K562 (cell line): ENCODE measurements at regions of chr7 and their contacts with region 1.

Region 1: DNA sequence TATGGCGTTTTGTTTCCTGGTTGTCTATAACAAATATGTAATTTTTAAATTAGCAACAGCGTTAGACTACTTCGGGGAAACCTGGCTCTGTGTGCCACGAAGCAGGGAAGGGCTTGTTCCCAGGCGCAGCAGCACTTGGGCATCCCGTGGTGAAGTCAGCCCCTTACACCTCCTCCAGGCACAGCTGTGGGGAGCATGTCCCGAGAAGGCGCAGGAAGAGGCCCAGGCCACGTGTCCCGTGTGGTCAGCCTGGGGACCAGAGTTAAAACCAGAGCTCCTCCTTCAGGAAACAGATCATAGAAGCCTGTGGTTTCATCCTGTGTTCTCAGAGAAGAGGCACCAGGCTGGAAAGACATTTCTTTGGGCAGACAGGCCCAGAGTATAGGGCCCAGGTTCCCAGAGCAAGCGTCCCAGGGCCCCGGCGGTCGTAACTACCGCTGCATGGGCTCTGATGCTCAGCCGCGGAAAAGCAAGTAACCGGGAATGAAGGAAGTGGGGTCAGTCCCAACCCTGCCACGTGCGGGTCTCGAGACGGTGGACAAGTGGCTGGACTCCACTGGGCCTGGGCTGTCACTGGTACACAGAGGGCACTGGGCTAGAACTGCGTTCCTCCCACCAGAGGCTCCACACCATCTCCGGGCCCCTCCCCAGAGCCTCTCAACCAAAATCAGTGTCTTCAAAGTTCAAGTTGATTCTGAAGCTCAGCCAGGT is 7.1 kb downstream of the NUDT1 start:
- DNase-seq: peak in 2 of 4 experiments; percentile 56 to 61
- ATAC-seq: peak; percentile 71
- H3K4me3 ChIP-seq: no peak overlapping the region
- H3K27ac ChIP-seq: no peak overlapping the region
- H3K4me1 ChIP-seq: peaks cover 9 to 41% of the 10 kb centered on the region in 2 experiments; a peak in 3 of 5 replicates
- H3K27me3 ChIP-seq: no peaks in the 10 kb centered on the region
- CTCF ChIP-seq: peak in 2 of 3 experiments; percentile 9 to 37; a peak in 2 of 6 replicates
- EP300 ChIP-seq: no peak
- POLR2A ChIP-seq: no peak
- RAD21 ChIP-seq: peak; percentile 33 to 47; a peak in 3 of 4 replicates

Region 2: GRCh38 chr7:1912593-1913465 is 336.3 kb before region 1 on chr7:
- CTCF ChIA-PET with region 1: no interaction called
- POLR2A ChIA-PET with region 1: no interaction called
- in situ Hi-C with region 1: no loop called
- intact Hi-C with region 1: no loop called
- DNase-seq: no peak
- ATAC-seq: no peak
- H3K4me3 ChIP-seq: no peak overlapping the region
- H3K27ac ChIP-seq: no peak overlapping the region
- H3K4me1 ChIP-seq: peaks cover 0 to 72% of the 10 kb centered on the region in 2 experiments; a peak in 2 of 5 replicates
- H3K27me3 ChIP-seq: no peaks in the 10 kb centered on the region
- CTCF ChIP-seq: no peak
- EP300 ChIP-seq: no peak
- POLR2A ChIP-seq: no peak
- RAD21 ChIP-seq: no peak

Region 3: GRCh38 chr7:2209146-2209960 is 39.8 kb before region 1 on chr7:
- CTCF ChIA-PET with region 1: no interaction called
- POLR2A ChIA-PET with region 1: no interaction called
- in situ Hi-C with region 1: no loop called
- intact Hi-C with region 1: no loop called
- DNase-seq: peak; percentile 59 to 67 (median 64)
- ATAC-seq: peak; percentile 96
- H3K4me3 ChIP-seq: no peak overlapping the region
- H3K27ac ChIP-seq: no peak overlapping the region
- H3K4me1 ChIP-seq: peaks cover 0 to 10% of the 10 kb centered on the region in 2 experiments; a peak in 1 of 5 replicates
- H3K27me3 ChIP-seq: no peaks in the 10 kb centered on the region
- CTCF ChIP-seq: peak; percentile 64 to 70 (median 69); a peak in 5 of 6 replicates
- EP300 ChIP-seq: no peak
- POLR2A ChIP-seq: no peak
- RAD21 ChIP-seq: peak; percentile 51 to 73

Region 4: DNA sequence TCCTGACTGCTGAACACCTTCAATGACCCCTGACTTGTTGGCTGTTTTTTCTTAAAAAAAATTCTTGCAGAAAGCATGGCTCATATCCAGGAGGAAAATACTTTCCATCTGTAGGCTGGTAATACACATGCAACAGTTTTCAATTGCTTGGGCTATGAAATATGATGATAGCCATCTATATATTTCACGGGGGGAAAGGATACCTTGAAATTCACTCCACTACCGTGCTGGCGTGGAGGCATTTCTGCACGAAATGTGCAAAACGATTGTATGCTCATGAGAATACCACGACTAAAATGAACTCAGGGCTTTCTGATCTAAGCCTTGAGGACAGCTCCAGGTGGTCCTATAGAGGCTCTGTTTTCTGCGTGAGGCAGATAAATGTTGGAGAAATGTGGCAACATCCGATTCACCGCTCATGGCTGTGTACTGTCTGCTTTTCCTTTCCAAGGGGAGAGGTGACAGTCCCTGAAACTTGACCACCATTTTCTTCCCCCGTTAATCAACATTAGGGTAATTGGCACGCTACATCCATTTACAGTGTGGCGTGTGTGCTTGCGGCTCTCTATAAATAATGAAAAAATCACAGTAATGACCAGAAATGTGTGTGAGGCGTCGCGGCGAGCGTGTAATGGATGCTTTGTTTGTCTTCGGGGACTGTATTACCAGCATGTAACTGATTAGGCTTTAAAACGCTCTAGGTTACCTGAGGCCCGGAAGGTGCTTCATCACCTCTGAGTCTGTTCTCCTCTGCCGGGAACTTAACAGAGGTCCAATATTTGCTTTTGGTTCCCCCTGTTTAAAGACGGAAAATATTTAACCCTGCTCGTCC is 807.3 kb after region 1 on chr7:
- CTCF ChIA-PET with region 1: no interaction called
- POLR2A ChIA-PET with region 1: no interaction called
- in situ Hi-C with region 1: loop called (anchors 5 kb)
- intact Hi-C with region 1: no loop called
- DNase-seq: no peak
- ATAC-seq: no peak
- H3K4me3 ChIP-seq: no peak overlapping the region
- H3K27ac ChIP-seq: no peak overlapping the region
- H3K4me1 ChIP-seq: no peaks in the 10 kb centered on the region
- H3K27me3 ChIP-seq: peaks cover 29 to 60% of the 10 kb centered on the region in 2 experiments
- CTCF ChIP-seq: no peak
- EP300 ChIP-seq: no peak
- POLR2A ChIP-seq: no peak
- RAD21 ChIP-seq: no peak